Ovary (tissue), 10 donors: ENCODE measurements at regions of chr2 and their contacts with region 1.

Region 1: GRCh38 chr2:133135035-133135654 is 433.1 kb downstream of the NCKAP5 start:
- DNase-seq: no peak
- H3K4me3 ChIP-seq: no peak overlapping the region
- H3K27ac ChIP-seq: no peak overlapping the region
- H3K4me1 ChIP-seq: no peaks in the 10 kb centered on the region
- H3K27me3 ChIP-seq: no peaks in the 10 kb centered on the region
- CTCF ChIP-seq: no peak
- EP300 ChIP-seq: no peak
- POLR2A ChIP-seq: no peak

Region 2: DNA sequence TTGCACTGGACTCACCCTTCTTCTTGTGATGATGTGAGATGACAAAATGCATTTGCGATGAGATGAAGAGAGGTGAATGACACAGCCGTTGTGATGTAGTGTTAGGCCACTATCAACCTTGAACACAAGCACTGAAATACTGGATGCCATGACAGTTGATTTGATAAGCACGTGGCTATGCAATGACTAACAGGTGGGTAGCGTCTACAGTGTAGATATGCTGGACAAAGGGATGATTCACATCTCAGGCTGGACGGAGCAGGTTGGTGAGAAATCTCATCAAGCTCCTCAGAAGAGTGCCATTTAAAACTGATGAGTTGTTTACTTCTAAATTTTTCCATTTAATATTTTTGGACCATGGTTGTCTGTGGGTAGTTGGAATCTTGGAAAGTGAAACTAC is 89.4 kb before region 1 on chr2:
- intact Hi-C with region 1: no loop called
- DNase-seq: no peak
- H3K4me3 ChIP-seq: no peak overlapping the region
- H3K27ac ChIP-seq: no peak overlapping the region
- H3K4me1 ChIP-seq: no peaks in the 10 kb centered on the region
- H3K27me3 ChIP-seq: no peaks in the 10 kb centered on the region
- CTCF ChIP-seq: no peak
- EP300 ChIP-seq: no peak
- POLR2A ChIP-seq: no peak

Region 3: DNA sequence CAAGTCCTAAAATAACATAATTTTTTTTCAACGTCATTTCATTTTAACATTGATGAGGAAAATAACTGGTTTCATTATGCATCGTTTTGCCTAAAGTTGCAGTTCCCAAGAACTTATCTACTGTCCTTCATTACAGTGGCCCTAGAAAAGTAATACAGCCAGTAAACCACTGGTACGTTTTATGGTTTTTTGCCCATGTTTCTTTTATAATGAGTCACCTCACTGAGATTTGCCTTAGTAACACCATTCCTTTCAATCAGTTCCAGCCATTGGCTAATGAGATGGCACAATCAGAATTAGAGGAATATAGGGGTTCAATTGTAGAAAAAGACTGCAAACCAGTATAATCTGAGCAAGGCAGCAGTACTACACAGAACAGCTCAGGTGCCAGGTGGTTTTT is 42.6 kb before region 1 on chr2:
- intact Hi-C with region 1: loop called in 1 of 4 experiments (anchors 2 kb)
- DNase-seq: no peak
- H3K4me3 ChIP-seq: no peak overlapping the region
- H3K27ac ChIP-seq: no peak overlapping the region
- H3K4me1 ChIP-seq: no peaks in the 10 kb centered on the region
- H3K27me3 ChIP-seq: no peaks in the 10 kb centered on the region
- CTCF ChIP-seq: no peak
- EP300 ChIP-seq: no peak
- POLR2A ChIP-seq: no peak